Tibial artery (tissue), 4 donors: ENCODE measurements at regions of chr14 and their contacts with region 1.

Region 1: DNA sequence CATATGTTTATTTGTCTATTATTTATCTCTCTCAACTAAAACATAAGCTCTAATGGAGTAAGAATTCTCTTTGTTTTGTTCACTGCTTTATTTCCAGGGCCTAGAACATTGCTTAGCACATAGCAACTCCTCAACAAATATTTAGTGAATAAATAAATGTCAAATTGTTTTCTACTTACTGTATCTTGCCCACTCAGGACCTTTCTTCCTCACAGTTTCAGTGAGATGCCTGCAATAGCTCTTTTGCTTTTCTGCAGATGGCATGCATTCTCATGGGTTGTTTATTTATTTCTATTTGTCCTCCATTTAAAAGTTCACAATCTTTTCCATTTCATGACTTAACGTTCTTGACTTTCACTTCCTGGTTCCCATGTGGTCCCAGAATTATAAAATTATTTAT is 94.9 kb upstream of the TTC7B start:
- DNase-seq: no peak
- H3K4me3 ChIP-seq: no peak overlapping the region
- H3K27ac ChIP-seq: no peak overlapping the region
- H3K4me1 ChIP-seq: no peaks in the 10 kb centered on the region
- H3K27me3 ChIP-seq: no peaks in the 10 kb centered on the region
- CTCF ChIP-seq: no peak

Region 2: GRCh38 chr14:91286530-91286937 is 375.4 kb after region 1 on chr14:
- intact Hi-C with region 1: loop called (anchors 10 kb)
- DNase-seq: peak; percentile 78 to 80
- H3K4me3 ChIP-seq: no peak overlapping the region
- H3K27ac ChIP-seq: no peak overlapping the region
- H3K4me1 ChIP-seq: peaks cover 0 to 21% (median 10%) of the 10 kb centered on the region in 4 donors
- H3K27me3 ChIP-seq: no peaks in the 10 kb centered on the region
- CTCF ChIP-seq: peak; percentile 84